Naive thymus-derived CD4-positive, alpha-beta T cell (primary cell): ENCODE measurements at regions of chr12 and their contacts with region 1.

Region 1: DNA sequence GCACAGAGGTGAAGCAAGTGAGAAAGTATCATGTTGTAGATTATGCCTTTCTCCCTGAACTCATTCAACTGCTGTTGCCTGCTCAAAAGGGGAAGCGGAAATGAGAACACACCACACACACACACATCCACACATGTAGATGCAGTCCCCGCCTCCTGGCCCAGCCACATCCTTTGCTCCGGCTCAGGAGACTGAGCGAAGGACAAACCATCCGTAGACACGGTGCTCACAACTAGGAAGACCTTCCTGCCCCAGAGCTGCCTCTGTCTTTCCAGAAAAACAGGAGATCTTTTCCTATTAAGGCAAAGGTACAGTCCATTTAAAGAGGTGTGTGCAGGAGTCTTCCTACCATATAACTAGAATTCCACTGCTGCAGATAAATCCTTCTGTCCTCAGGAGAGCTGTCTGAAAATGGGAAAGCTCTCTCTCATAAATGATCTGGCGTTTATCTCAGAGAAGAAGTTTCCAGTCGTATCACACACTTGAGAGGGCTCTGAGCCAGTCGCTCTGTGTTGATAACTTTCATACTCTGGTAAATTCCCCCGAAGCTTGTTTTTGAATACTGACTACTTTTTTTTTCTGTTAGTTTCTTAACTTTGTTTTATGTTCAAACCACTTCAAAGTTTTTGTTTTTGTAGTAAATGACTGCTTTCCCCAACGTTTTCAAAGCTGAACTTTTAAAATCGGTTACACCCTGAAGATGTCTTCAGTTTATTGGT is at the start of gene TESPA1:
- DNase-seq: peak; percentile 55 to 94 (median 90)
- ATAC-seq: peak; percentile 93
- H3K4me3 ChIP-seq: peak within 1 kb of the TSS; percentile 67
- H3K4me3 Mint-ChIP-seq: peak within 1 kb of the TSS; percentile 90 to 98 (median 95)
- H3K27ac ChIP-seq: peak within 1 kb of the TSS; percentile 94
- H3K27ac Mint-ChIP-seq: peak within 1 kb of the TSS; percentile 95 to 100 (median 98)
- H3K4me1 ChIP-seq: peaks cover 49 to 51% of the 10 kb centered on the region in 2 donors
- H3K4me1 Mint-ChIP-seq: peaks cover 45 to 78% (median 69%) of the 10 kb centered on the region in 7 donors
- H3K27me3 ChIP-seq: no peaks in the 10 kb centered on the region
- H3K27me3 Mint-ChIP-seq: no peaks in the 10 kb centered on the region
- total RNA-seq, gene TESPA1: 120 to 301 (median 186) TPM

Region 2: DNA sequence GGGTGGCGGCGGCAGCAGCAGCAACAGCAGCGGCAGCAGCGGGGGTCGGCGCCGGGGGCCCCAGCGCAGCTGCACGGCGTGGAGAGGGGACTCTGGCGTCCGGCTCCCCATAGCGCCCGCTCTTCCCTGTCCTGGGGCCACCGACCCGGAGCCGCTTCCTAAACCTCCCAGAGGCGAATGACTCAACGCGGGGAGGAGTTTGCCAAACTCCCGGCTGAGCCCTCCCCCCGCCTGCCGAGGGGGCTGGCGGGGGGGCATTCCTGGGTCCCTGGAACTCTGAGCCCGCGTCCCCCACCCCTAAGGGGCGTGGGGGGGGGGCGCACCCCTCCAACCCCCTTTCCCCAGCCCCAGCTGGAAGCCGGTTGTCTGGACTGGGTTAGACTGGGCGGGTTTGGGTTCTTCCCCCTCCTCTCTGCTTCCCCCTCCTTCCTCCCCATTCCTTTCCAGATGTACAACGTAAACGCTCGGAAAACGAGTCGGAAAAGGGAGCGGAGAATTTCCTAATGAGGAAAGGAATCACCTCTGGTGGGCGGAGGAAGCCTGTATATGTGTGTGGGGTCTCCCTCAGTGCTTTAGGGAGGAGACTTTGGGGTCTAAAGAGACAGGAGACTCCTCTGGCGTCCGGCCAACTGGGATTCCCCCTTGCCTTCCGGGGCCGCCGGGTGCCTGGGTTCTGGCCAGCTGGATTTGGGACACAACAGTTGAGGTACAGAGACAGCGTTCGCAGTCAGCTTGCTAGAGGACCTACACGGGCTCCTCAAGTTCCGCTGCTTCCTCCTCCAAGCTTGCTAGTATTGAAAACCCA is 565.5 kb before region 1 on chr12 and contains the start of gene ITGA5:
- CTCF ChIA-PET with region 1: no interaction called
- POLR2A ChIA-PET with region 1: no interaction called
- intact Hi-C with region 1: loop called in 1 of 2 experiments (anchors 10 kb)
- DNase-seq: peak in 4 of 9 donors; percentile 16 to 53 (median 28)
- ATAC-seq: peak; percentile 48
- H3K4me3 ChIP-seq: peak within 1 kb of the TSS; percentile 86
- H3K4me3 Mint-ChIP-seq: peak within 1 kb of the TSS; percentile 78 to 98 (median 94)
- H3K27ac ChIP-seq: peak within 1 kb of the TSS; percentile 96
- H3K27ac Mint-ChIP-seq: peak within 1 kb of the TSS; percentile 87 to 100 (median 97)
- H3K4me1 ChIP-seq: peaks cover 44 to 49% of the 10 kb centered on the region in 2 donors
- H3K4me1 Mint-ChIP-seq: peaks cover 34 to 63% (median 52%) of the 10 kb centered on the region in 7 donors
- H3K27me3 ChIP-seq: no peaks in the 10 kb centered on the region
- H3K27me3 Mint-ChIP-seq: peaks cover 0 to 24% (median 0%) of the 10 kb centered on the region in 5 donors
- total RNA-seq, gene ITGA5: 73.9 to 169 (median 145) TPM

Region 3: GRCh38 chr12:54853995-54854566 is 130.7 kb before region 1 on chr12 and contains the start of gene MUCL1:
- CTCF ChIA-PET with region 1: interaction called, 8 read pairs
- POLR2A ChIA-PET with region 1: interaction called, 6 read pairs
- intact Hi-C with region 1: loop called in 1 of 2 experiments (anchors 1 kb)
- DNase-seq: peak; percentile 21 to 79 (median 73)
- ATAC-seq: peak; percentile 99
- H3K4me3 ChIP-seq: no peak within 1 kb of the TSS
- H3K4me3 Mint-ChIP-seq: no peak within 1 kb of the TSS
- H3K27ac ChIP-seq: no peak within 1 kb of the TSS
- H3K27ac Mint-ChIP-seq: peak within 1 kb of the TSS in 2 of 9 donors; percentile 44 to 70
- H3K4me1 ChIP-seq: no peaks in the 10 kb centered on the region
- H3K4me1 Mint-ChIP-seq: peaks cover 0 to 12% (median 5%) of the 10 kb centered on the region in 7 donors
- H3K27me3 ChIP-seq: no peaks in the 10 kb centered on the region
- H3K27me3 Mint-ChIP-seq: peaks cover 0 to 4% (median 0%) of the 10 kb centered on the region in 5 donors
- total RNA-seq, gene MUCL1: not detected

Region 4: DNA sequence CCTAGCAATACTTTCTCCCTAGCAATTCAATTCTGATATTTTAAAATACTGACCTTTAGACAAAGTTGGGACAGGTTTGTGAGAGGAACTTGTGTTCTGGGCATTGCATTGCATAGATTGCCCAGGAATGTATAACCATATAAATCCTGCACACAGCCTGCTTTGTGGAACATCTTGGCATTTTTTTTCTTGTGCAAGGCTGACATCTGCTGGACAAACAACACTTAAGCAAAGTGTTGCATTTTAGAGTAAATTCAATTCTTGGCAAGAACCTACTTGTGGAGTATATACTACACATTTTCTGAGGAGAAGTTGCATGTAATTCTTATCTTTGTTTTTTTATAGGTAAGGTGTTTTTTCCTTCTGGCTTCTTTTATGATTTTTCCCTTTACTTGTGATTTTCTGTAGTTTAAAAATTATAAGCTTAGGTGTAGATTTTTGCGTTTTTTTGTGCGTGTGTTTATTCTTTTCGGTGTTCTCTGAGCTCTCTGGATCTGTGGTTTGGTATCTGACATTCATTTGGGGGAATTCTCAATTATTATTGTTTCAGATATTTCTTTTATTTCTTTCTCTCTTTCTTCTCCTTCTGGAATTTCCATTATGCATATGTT is 26.7 kb before region 1 on chr12:
- CTCF ChIA-PET with region 1: interaction called, 12 read pairs
- POLR2A ChIA-PET with region 1: interaction called, 309 read pairs
- intact Hi-C with region 1: loop called in 1 of 2 experiments (anchors 2 kb)
- DNase-seq: peak in 7 of 9 donors; percentile 28 to 66 (median 58)
- ATAC-seq: peak; percentile 73
- H3K4me3 ChIP-seq: no peak overlapping the region
- H3K4me3 Mint-ChIP-seq: peak overlapping the region in 7 of 10 donors; percentile 1 to 65 (median 40)
- H3K27ac ChIP-seq: peak overlapping the region; percentile 0
- H3K27ac Mint-ChIP-seq: peak overlapping the region; percentile 5 to 94 (median 77)
- H3K4me1 ChIP-seq: peaks cover 33 to 69% of the 10 kb centered on the region in 2 donors
- H3K4me1 Mint-ChIP-seq: peaks cover 64 to 100% (median 95%) of the 10 kb centered on the region in 7 donors
- H3K27me3 ChIP-seq: no peaks in the 10 kb centered on the region
- H3K27me3 Mint-ChIP-seq: no peaks in the 10 kb centered on the region

Region 5: DNA sequence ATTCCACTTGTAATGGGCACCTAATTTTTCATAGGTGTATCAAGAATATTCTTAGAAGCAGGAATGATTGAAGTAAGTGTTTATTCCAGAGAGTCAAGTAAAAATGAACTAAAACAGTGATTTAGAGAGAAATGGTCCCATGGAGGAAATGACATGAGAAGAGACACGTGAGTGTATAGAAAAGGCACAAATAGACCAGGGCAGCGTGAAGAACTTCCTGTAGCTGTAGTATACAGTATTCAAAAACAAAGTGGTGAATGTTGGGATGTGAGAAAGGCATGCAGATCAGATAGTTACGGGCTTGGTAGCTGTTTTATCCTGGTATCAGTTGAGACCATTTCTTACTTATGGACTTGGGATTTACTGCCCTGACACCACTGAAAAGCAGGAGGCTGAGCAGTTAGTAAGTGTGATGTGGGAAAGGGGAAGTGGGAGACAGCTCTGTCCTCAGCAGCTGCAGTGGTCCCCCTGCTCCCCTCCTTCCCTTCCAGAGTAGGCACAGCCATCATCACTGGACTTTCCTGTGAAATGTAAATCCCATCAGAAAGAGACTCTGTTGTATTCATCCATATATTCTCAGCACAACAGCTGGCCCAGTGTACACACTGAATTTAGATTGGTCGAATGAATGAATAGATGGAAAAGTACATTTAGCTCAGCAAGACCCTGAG is 16.5 kb after region 1 on chr12:
- CTCF ChIA-PET with region 1: interaction called, 5 read pairs
- POLR2A ChIA-PET with region 1: interaction called, 22 read pairs
- intact Hi-C with region 1: no loop called
- DNase-seq: no peak
- ATAC-seq: peak; percentile 59
- H3K4me3 ChIP-seq: no peak overlapping the region
- H3K4me3 Mint-ChIP-seq: peak overlapping the region in 8 of 10 donors; percentile 1 to 81 (median 59)
- H3K27ac ChIP-seq: peak overlapping the region; percentile 11
- H3K27ac Mint-ChIP-seq: peak overlapping the region in 8 of 9 donors; percentile 53 to 83 (median 72)
- H3K4me1 ChIP-seq: peaks cover 0 to 16% of the 10 kb centered on the region in 2 donors
- H3K4me1 Mint-ChIP-seq: peaks cover 8 to 33% (median 21%) of the 10 kb centered on the region in 7 donors
- H3K27me3 ChIP-seq: no peaks in the 10 kb centered on the region
- H3K27me3 Mint-ChIP-seq: peaks cover 0 to 5% (median 0%) of the 10 kb centered on the region in 5 donors

Region 6: GRCh38 chr12:55172686-55173085 is 187.9 kb after region 1 on chr12:
- CTCF ChIA-PET with region 1: no interaction called
- POLR2A ChIA-PET with region 1: no interaction called
- intact Hi-C with region 1: no loop called
- DNase-seq: no peak
- ATAC-seq: no peak
- H3K4me3 ChIP-seq: no peak overlapping the region
- H3K4me3 Mint-ChIP-seq: no peak overlapping the region
- H3K27ac ChIP-seq: no peak overlapping the region
- H3K27ac Mint-ChIP-seq: no peak overlapping the region
- H3K4me1 ChIP-seq: no peaks in the 10 kb centered on the region
- H3K4me1 Mint-ChIP-seq: no peaks in the 10 kb centered on the region
- H3K27me3 ChIP-seq: no peaks in the 10 kb centered on the region
- H3K27me3 Mint-ChIP-seq: peaks cover 5 to 28% (median 20%) of the 10 kb centered on the region in 5 donors

Region 7: GRCh38 chr12:55428331-55429243 is 443.8 kb after region 1 on chr12:
- CTCF ChIA-PET with region 1: no interaction called
- POLR2A ChIA-PET with region 1: no interaction called
- intact Hi-C with region 1: no loop called
- DNase-seq: no peak
- ATAC-seq: no peak
- H3K4me3 ChIP-seq: no peak overlapping the region
- H3K4me3 Mint-ChIP-seq: no peak overlapping the region
- H3K27ac ChIP-seq: no peak overlapping the region
- H3K27ac Mint-ChIP-seq: no peak overlapping the region
- H3K4me1 ChIP-seq: no peaks in the 10 kb centered on the region
- H3K4me1 Mint-ChIP-seq: peaks cover 0 to 1% (median 0%) of the 10 kb centered on the region in 7 donors
- H3K27me3 ChIP-seq: peaks cover 0 to 3% of the 10 kb centered on the region in 2 donors
- H3K27me3 Mint-ChIP-seq: peaks cover 3 to 38% (median 25%) of the 10 kb centered on the region in 5 donors